ENCODE measurements at regions of chr6 and their contacts with region 1.

Region 1: DNA sequence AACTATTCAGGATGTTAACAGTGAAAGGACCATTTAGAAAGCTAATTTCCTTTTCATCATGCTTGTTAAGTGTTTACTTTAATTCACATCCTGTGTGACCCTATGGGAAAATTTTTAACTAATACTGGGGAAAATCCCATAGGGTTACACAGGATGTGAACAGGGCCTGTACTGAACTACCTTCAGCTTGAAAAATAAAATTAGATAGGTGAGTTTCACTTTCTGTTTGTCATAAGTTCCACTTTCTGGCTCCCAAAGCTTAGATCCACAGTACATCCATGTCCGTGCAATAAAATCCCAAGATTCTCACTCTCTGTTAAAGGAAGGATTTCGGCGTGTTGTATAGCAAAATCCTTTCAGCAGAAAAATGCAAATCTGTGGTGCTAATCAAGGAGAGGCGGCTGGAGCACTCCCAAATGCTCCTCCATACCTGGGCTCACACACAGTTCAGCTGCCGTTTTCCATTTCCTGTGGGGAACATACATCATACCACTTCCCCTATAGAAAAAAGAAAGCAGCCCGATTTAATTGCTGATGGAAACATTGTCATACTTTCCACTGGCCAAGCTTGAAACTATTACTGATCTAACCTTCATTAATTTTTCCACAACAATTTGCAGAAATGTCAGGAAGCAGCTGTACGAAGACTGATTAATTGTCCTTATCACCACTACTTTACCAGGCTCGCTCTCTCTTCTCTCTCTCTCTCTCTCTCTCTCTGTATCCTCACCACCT is 125.2 kb downstream of the HIVEP2 start:
- DNase-seq: no peak
- H3K4me3 ChIP-seq: peak overlapping the region; percentile 24 to 67 (median 38)
- H3K27ac ChIP-seq: peak overlapping the region; percentile 73 to 92 (median 86)
- H3K4me1 ChIP-seq: peaks cover 29 to 77% (median 48%) of the 10 kb centered on the region in 6 donors
- H3K27me3 ChIP-seq: no peaks in the 10 kb centered on the region
- CTCF ChIP-seq: no peak
- POLR2A ChIP-seq: no peak

Region 2: DNA sequence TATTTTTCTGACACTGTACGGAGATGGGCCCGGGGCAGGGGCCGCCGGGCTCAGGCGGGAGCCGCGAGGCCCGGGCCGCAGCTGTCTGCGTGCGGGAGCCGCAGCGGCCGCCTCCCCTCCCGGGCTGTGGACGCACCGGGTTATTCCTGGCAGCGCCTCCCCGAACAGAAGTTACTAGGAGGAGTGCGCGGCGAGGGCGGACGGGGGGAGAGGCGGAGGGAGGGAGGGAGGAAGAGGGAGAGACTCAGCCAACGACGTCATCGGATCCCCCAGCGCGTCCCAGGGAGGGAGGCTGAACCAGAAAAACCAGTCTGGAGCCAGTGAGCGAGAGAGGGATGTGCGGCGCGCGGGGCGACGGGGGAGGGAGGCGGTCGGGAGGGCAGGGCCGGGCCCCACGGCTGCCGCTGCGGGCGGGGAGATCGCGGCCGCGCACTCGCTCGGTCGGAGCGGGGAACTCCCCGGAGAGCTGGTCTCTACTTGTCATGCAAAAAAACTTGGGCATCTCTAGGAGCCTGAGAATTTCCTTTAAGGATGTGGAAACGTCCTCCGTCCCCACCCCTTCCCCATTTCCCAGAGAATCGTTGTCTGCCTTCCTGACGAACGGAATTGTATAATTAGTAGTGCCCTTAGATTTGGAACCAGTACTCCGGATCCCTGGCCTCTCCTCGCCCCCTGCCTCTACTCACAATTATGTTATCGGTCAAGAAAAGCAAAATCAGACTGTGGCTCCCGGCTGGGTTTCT is 126.6 kb after region 1 on chr6:
- intact Hi-C with region 1: loop called (anchors 10 kb)
- DNase-seq: peak; percentile 95
- H3K4me3 ChIP-seq: peak overlapping the region; percentile 75 to 92 (median 82)
- H3K27ac ChIP-seq: peak overlapping the region; percentile 95 to 99 (median 99)
- H3K4me1 ChIP-seq: peaks cover 26 to 41% (median 35%) of the 10 kb centered on the region in 6 donors
- H3K27me3 ChIP-seq: no peaks in the 10 kb centered on the region
- CTCF ChIP-seq: no peak
- POLR2A ChIP-seq: peak in 2 of 3 donors; percentile 50 to 80

Measured in spleen (tissue), 13 donors.